ENCODE measurements at regions of chr7 and their contacts with region 1.

Region 1: GRCh38 chr7:107879400-107880035 is 11.5 kb upstream of the DLD start:
- DNase-seq: peak; percentile 41
- H3K4me3 ChIP-seq: no peak overlapping the region
- H3K27ac ChIP-seq: no peak overlapping the region
- H3K4me1 ChIP-seq: no peaks in the 10 kb centered on the region
- H3K27me3 ChIP-seq: no peaks in the 10 kb centered on the region
- CTCF ChIP-seq: peak; percentile 83

Region 2: DNA sequence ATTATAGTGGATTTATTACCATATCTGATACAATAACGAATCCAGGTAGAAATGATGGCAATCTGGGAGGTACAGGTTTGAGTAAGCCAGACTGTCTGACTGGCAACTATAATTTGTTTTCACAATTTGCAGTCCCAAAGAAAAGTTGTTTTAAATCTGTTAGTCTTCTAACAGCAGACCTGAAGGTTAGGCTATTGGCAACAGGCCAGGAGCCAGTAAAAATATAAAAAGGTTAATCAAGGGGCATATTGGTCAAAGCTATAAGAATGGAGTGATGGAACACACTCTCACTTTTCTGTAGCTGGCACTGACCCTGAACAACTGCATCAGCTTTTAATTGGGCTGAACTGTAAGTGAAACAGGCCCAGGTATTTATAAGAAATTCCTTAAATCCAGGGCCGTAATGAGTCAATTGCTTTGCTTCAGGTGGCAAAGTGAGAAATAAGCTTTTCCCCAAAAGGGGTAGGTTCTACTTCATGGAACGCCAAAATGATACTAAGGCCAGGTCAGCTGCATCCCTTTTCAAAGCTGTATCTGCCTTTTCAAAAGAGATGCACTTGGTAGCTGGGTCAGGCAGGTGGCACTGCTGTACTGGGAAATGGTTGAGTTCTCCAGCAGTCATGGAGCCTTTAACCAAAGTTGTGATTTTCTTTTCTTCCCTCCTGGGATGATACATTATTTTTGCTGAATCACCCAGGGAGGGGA is 416.6 kb before region 1 on chr7:
- intact Hi-C with region 1: loop called (anchors 5 kb)
- DNase-seq: peak; percentile 34
- H3K4me3 ChIP-seq: no peak overlapping the region
- H3K27ac ChIP-seq: no peak overlapping the region
- H3K4me1 ChIP-seq: no peaks in the 10 kb centered on the region
- H3K27me3 ChIP-seq: no peaks in the 10 kb centered on the region
- CTCF ChIP-seq: peak; percentile 60

Region 3: DNA sequence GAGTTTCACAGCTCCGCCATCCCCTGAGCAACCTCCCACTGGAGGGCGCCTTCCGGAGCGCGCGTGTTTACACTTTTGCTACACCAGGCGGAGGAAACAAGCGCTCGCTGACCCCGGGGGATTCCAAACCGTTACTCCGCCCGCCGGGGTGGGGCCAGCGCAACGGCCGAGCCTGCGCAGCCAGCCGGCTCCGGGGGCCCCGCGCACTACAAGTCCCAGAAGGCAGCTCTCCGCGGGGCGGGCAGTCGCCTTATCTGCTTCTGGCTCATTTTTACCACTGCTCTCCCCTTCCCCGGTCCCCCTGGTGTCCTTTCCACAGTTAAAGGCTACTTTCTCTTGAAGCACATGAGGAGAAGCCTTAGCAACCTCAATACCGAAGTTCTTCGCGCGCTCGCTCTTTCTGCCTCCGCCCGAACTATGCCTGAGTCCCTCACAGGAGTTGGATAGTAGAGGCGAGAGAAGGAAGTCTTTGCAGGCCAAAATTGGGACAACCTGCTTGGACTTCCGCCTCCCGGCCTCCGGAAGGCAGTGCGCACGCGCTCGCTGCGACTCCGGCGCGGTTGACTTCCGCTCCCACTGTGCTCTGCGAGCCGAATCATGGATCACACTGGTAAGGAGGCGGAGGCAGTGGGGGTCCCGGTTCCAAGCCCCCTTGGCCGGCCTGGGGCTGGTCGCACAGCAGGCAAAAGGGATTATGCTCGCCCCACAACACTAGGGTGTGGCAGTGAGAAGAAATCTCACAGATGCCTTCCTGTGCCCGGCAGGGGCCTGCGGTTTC is 135.8 kb before region 1 on chr7 and contains the start of gene CBLL1:
- intact Hi-C with region 1: loop called (anchors 2 kb)
- DNase-seq: peak; percentile 97
- H3K4me3 ChIP-seq: peak within 1 kb of the TSS; percentile 71
- H3K27ac ChIP-seq: peak within 1 kb of the TSS; percentile 94
- H3K4me1 ChIP-seq: peaks cover 14% of the 10 kb centered on the region
- H3K27me3 ChIP-seq: no peaks in the 10 kb centered on the region
- CTCF ChIP-seq: peak; percentile 40
- total RNA-seq, gene CBLL1: 21.5 to 23.2 TPM

Region 4: DNA sequence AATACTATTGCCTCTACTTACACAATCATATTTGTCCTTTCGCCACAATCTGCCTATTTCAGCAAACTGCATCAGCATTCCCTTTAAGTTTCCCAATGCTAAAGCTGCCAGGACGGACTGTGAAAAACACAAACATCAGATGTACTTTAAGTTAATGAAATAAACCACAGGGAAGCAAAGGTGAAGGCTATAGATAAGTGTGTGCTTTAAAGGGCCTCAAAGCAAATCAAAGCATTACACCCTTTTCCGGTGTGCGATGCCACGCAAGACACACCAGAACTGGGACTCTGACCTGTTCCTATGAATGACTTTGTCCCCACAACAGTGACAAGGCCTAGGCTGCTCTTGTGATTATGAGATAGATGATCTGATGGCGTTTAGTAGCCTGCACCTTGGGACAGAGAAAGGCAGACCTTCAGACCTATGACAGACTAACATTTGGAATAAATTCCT is 99.8 kb before region 1 on chr7:
- intact Hi-C with region 1: loop called (anchors 10 kb)
- DNase-seq: peak; percentile 58
- H3K4me3 ChIP-seq: no peak overlapping the region
- H3K27ac ChIP-seq: no peak overlapping the region
- H3K4me1 ChIP-seq: no peaks in the 10 kb centered on the region
- H3K27me3 ChIP-seq: no peaks in the 10 kb centered on the region
- CTCF ChIP-seq: no peak

Region 5: DNA sequence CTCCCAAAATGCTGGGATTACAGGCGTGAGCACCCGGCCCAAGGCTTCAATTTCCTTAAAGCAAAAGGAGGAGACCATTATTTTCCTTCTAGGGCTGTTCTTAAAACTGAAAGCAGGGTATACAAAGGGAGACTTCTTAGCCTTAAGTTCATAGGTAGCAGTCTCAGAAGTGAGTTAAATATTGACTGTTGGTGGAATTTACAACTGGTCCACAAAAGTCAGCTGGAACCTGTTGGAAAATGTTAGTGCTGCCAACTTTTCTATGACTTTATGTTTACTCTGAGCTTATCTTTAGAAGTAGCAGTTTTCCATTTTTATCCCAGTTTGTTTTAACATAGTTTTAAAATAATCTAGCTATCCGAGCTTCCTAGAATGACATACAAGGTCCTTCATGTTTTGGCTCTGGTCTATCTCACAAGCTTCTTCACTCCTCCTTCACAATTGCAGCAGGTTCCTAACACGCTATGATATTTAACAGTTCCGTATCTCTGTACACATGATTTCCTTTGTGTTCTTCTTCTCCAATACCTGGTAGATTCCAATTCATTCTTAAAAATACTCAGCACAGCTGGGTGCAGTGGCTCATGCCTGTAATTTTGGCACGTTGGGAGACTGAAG is 79.8 kb before region 1 on chr7:
- intact Hi-C with region 1: loop called (anchors 5 kb)
- DNase-seq: peak; percentile 47
- H3K4me3 ChIP-seq: no peak overlapping the region
- H3K27ac ChIP-seq: peak overlapping the region; percentile 65
- H3K4me1 ChIP-seq: no peaks in the 10 kb centered on the region
- H3K27me3 ChIP-seq: no peaks in the 10 kb centered on the region
- CTCF ChIP-seq: no peak

Region 6: GRCh38 chr7:108146070-108146837 is 266.7 kb after region 1 on chr7:
- intact Hi-C with region 1: loop called (anchors 10 kb)
- DNase-seq: peak; percentile 75
- H3K4me3 ChIP-seq: no peak overlapping the region
- H3K27ac ChIP-seq: no peak overlapping the region
- H3K4me1 ChIP-seq: no peaks in the 10 kb centered on the region
- H3K27me3 ChIP-seq: no peaks in the 10 kb centered on the region
- CTCF ChIP-seq: peak; percentile 85

Region 7: GRCh38 chr7:109059089-109059488 is 1179.6 kb after region 1 on chr7:
- intact Hi-C with region 1: no loop called
- DNase-seq: no peak
- H3K4me3 ChIP-seq: no peak overlapping the region
- H3K27ac ChIP-seq: no peak overlapping the region
- H3K4me1 ChIP-seq: no peaks in the 10 kb centered on the region
- H3K27me3 ChIP-seq: no peaks in the 10 kb centered on the region
- CTCF ChIP-seq: no peak